Dorsolateral prefrontal cortex (tissue), 120 donors: ENCODE measurements at regions of chr6 and their contacts with region 1.

Region 1: DNA sequence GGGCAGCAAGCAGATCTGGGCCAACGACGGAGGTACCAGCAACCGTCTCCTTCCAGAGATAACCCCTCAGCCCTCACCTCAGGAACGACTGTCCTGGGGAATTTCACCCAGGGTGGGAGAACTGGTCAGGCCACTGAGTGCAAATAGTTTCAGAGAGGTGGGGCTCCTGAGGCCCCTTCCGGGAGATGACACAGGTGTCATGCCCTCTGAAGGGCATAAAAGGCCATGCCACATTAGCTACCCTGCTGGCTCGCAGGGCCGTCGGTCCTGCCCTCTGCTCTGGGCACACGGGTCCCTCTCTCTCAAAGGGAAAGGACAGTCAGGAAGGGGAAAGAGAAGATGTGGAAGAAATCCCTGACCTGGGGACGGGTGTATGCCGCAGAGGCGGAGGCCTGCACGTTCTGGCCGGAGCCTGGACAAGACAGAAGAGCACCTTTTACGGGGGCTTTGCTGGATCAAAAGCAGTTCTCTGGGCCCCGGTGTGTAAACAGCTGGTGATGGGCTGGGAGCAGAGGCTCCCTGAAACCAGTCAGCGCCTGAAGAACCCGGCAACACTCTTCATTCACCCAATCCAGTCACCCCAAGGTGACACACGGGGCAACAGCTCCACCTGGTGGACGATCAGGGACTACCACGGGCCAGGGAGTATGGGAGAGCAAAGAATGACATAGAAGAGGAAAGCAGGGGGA is 6.4 kb upstream of the TAF8 start:
- DNase-seq: peak; percentile 80 to 92 (median 86)
- H3K4me3 ChIP-seq: peak overlapping the region in 38 of 59 donors; percentile 1 to 52 (median 26)
- H3K27ac ChIP-seq: peak overlapping the region in 45 of 59 donors; percentile 23 to 99 (median 88)
- H3K27me3 ChIP-seq: no peaks in the 10 kb centered on the region
- CTCF ChIP-seq: peak; percentile 88 to 99 (median 98)

Region 2: GRCh38 chr6:41545703-41546474 is 498.0 kb before region 1 on chr6 and contains the start of gene FOXP4:
- intact Hi-C with region 1: loop called in 1 of 2 experiments (anchors 10 kb)
- DNase-seq: peak; percentile 75 to 93 (median 89)
- H3K4me3 ChIP-seq: peak within 1 kb of the TSS; percentile 52 to 87 (median 74)
- H3K27ac ChIP-seq: peak within 1 kb of the TSS in 18 of 59 donors; percentile 13 to 78 (median 50)
- H3K27me3 ChIP-seq: peaks cover 0 to 24% (median 0%) of the 10 kb centered on the region in 45 donors
- CTCF ChIP-seq: peak in 11 of 56 donors; percentile 13 to 33 (median 22)
- total RNA-seq, gene FOXP4: 19.2 to 35.8 (median 25.0) TPM

Region 3: DNA sequence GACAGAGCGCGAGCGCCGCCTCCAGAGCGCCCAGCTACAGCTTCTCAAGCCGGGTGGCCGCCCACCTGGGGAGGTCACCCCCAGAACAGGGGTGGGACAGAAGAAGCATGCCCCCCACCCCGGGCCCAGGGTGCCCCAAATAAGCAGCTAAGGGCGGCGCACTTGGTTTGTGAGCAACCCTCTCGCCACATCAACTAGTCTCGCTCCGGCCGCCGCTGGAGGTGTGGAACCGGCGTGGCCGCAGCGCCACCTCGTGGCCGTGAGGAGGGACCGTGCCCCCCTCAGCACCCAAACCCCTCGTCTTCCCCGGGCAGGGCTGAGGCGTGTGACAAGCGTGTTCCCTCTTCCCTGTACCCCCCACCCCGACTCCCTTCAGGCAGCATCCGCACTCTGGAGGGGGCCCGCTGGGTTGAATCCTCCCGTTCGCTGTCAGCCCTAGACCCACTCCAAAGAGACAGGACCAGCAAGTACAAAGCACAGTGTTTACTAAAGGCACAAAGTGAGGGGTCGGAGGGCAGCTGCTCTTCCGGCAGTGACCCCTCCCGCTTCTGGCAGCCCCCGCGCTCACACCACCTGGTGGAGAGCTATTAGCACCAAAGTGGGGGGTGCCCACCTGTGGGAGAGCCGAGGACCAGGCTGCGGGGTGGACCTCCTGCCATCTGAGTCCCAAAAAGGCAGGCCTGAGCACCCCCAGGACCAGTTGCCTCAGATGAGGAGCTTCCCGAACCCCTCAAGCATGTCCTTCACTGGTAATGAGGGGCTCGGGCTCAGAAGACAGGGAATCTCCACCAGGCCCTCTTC is 360.2 kb before region 1 on chr6:
- intact Hi-C with region 1: loop called in 1 of 2 experiments (anchors 10 kb)
- DNase-seq: peak; percentile 70 to 88 (median 85)
- H3K4me3 ChIP-seq: peak overlapping the region in 58 of 59 donors; percentile 15 to 71 (median 54)
- H3K27ac ChIP-seq: peak overlapping the region; percentile 77 to 100 (median 95)
- H3K27me3 ChIP-seq: no peaks in the 10 kb centered on the region
- CTCF ChIP-seq: peak; percentile 83 to 98 (median 95)

Region 4: GRCh38 chr6:41801380-41801779 is 242.6 kb before region 1 on chr6:
- intact Hi-C with region 1: loop called in 1 of 2 experiments (anchors 5 kb)
- DNase-seq: no peak
- H3K4me3 ChIP-seq: no peak overlapping the region
- H3K27ac ChIP-seq: peak overlapping the region in 11 of 59 donors; percentile 7 to 54 (median 20)
- H3K27me3 ChIP-seq: no peaks in the 10 kb centered on the region
- CTCF ChIP-seq: peak in 50 of 56 donors; percentile 16 to 68 (median 46)

Region 5: DNA sequence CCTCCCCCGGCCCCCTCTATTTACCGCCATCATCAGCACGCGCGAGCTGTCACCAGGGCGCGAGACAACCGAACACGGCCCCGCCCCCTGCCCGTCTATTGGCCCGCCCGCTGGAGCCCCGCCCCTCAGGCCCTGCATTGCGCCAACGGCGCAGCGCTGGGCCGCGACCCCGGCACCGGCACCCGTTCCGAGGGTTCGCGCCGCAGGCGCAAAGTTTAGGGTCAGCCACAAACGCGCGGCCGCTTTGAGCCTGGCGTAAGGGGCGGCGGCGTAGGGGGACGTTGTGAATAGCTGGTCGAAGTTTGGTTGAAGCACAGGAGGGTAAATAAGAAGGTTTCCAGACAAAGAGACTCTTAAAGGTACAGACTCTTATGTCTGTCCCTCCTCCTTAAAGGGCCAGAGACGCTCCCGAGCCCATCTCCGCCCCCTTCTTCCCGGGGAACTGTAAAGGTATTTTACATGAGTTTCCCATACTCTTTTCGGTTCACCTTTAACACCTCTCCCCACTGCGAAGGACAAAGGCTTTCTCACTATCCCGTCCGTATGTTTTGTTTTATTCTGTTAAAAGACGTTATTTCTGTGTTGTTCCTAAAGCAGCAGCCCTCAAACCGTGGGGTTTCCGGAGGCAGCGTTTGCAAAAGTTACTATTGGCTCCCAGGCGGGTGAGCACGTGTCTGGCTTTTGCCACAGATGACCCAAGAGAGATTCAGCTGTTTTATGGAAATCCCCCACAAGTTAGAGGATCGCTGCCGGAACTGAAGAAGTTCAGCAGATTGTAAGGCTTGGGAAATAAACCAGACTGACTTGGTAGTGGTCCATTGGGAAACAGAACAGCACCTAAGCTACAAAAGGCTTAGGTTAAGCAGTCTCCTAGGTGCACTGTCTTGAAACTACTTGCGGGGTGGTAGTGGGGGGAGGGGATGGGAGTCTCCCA is 148.4 kb before region 1 on chr6 and contains the start of gene USP49:
- intact Hi-C with region 1: loop called in 1 of 2 experiments (anchors 5 kb)
- DNase-seq: peak; percentile 79 to 92 (median 88)
- H3K4me3 ChIP-seq: peak within 1 kb of the TSS; percentile 57 to 96 (median 83)
- H3K27ac ChIP-seq: peak within 1 kb of the TSS in 54 of 59 donors; percentile 36 to 93 (median 76)
- H3K27me3 ChIP-seq: no peaks in the 10 kb centered on the region
- CTCF ChIP-seq: peak in 8 of 56 donors; percentile 12 to 38 (median 20)
- total RNA-seq, gene USP49: 7.2 to 16.4 (median 11.2) TPM

Region 6: GRCh38 chr6:41941280-41942066 is 102.5 kb before region 1 on chr6 and contains the start of gene CCND3:
- intact Hi-C with region 1: loop called (anchors 2 kb)
- DNase-seq: peak; percentile 77 to 96 (median 91)
- H3K4me3 ChIP-seq: peak within 1 kb of the TSS; percentile 66 to 97 (median 88)
- H3K27ac ChIP-seq: peak within 1 kb of the TSS; percentile 27 to 94 (median 84)
- H3K27me3 ChIP-seq: no peaks in the 10 kb centered on the region
- CTCF ChIP-seq: peak in 22 of 56 donors; percentile 1 to 51 (median 19)
- total RNA-seq, gene CCND3: 55.7 to 135 (median 83.5) TPM

Region 7: DNA sequence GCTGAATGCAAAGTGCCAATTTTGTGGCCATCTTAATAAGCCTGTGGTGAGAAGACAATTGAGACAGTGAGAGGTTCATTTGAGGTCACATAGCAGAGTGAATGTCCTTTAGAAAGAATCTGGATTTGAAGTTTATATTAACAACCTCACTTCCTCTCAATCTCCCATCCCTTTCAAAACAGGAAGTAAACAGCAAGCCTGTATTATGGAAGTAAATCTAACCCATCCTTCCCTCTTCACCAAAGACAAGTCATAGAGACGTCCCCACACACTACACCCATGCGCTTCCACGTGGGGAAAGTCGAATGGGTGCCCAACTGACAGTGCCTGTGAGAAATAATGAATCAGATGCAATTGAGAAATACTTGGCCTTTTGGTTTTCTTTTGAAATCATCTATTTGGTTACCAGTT is 73.5 kb before region 1 on chr6:
- intact Hi-C with region 1: no loop called
- DNase-seq: no peak
- H3K4me3 ChIP-seq: no peak overlapping the region
- H3K27ac ChIP-seq: no peak overlapping the region
- H3K27me3 ChIP-seq: no peaks in the 10 kb centered on the region
- CTCF ChIP-seq: no peak